ENCODE measurements at regions of chr11 and their contacts with region 1.

Region 1: GRCh38 chr11:57644748-57645688 is 4.7 kb downstream of the YPEL4 start:
- DNase-seq: no peak
- H3K4me3 ChIP-seq: no peak overlapping the region
- H3K27me3 ChIP-seq: no peaks in the 10 kb centered on the region
- CTCF ChIP-seq: peak; percentile 91

Region 2: GRCh38 chr11:57493507-57494503 is 151.2 kb before region 1 on chr11:
- CTCF ChIA-PET with region 1: interaction called, 13 read pairs
- POLR2A ChIA-PET with region 1: no interaction called
- DNase-seq: no peak
- H3K4me3 ChIP-seq: no peak overlapping the region
- H3K27me3 ChIP-seq: no peaks in the 10 kb centered on the region
- CTCF ChIP-seq: peak; percentile 89

Region 3: GRCh38 chr11:57567515-57568329 is 77.3 kb before region 1 on chr11 and contains the start of gene UBE2L6:
- CTCF ChIA-PET with region 1: interaction called, 285 read pairs
- POLR2A ChIA-PET with region 1: interaction called, 5 read pairs
- DNase-seq: no peak
- H3K4me3 ChIP-seq: peak within 1 kb of the TSS; percentile 83
- H3K27me3 ChIP-seq: no peaks in the 10 kb centered on the region
- CTCF ChIP-seq: no peak
- polyA plus RNA-seq, gene UBE2L6: 57.3 and 67.0 TPM in 2 replicates

Region 4: GRCh38 chr11:57604296-57605027 is 40.6 kb before region 1 on chr11:
- CTCF ChIA-PET with region 1: interaction called, 30 read pairs
- POLR2A ChIA-PET with region 1: interaction called, 16 read pairs
- DNase-seq: no peak
- H3K4me3 ChIP-seq: no peak overlapping the region
- H3K27me3 ChIP-seq: no peaks in the 10 kb centered on the region
- CTCF ChIP-seq: no peak

Region 5: GRCh38 chr11:57657194-57658022 is 12.4 kb after region 1 on chr11 and contains the start of gene CLP1:
- CTCF ChIA-PET with region 1: interaction called, 14 read pairs
- POLR2A ChIA-PET with region 1: no interaction called
- DNase-seq: peak; percentile 94
- H3K4me3 ChIP-seq: peak within 1 kb of the TSS; percentile 85
- H3K27me3 ChIP-seq: no peaks in the 10 kb centered on the region
- CTCF ChIP-seq: no peak
- polyA plus RNA-seq, gene CLP1: 19.0 and 19.6 TPM in 2 replicates

Region 6: DNA sequence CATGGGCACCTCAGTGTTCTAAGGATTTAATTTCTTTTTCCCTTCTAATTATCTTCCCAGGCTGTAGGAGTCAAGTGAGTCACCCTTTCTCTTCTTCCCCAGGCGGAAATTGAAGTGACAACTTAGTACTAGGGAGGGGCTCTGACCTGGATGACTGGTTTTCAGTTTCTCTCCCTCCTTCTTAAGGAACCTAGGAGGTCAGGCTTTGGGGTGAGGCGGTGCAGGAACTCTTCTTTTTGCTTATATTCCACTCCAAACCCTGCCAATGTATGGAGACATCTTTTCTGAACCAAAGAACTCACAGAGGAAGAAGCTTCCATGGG is 35.5 kb after region 1 on chr11:
- CTCF ChIA-PET with region 1: no interaction called
- POLR2A ChIA-PET with region 1: no interaction called
- DNase-seq: no peak
- H3K4me3 ChIP-seq: no peak overlapping the region
- H3K27me3 ChIP-seq: no peaks in the 10 kb centered on the region
- CTCF ChIP-seq: no peak